ENCODE measurements at regions of chr7 and their contacts with region 1.

Region 1: GRCh38 chr7:117229350-117229749 is 93.5 kb downstream of the WNT2 start:
- DNase-seq: no peak
- ATAC-seq: no peak
- H3K4me3 ChIP-seq: no peak overlapping the region
- H3K27ac ChIP-seq: no peak overlapping the region
- H3K4me1 ChIP-seq: peaks cover 0 to 2% (median 0%) of the 10 kb centered on the region in 12 donors
- H3K27me3 ChIP-seq: no peaks in the 10 kb centered on the region
- CTCF ChIP-seq: no peak
- POLR2A ChIP-seq: no peak

Region 2: GRCh38 chr7:117110480-117111337 is 118.6 kb before region 1 on chr7:
- intact Hi-C with region 1: no loop called
- DNase-seq: no peak
- ATAC-seq: peak in 3 of 4 donors; percentile 32 to 42 (median 39)
- H3K4me3 ChIP-seq: no peak overlapping the region
- H3K27ac ChIP-seq: no peak overlapping the region
- H3K4me1 ChIP-seq: peaks cover 3 to 26% (median 14%) of the 10 kb centered on the region in 12 donors
- H3K27me3 ChIP-seq: no peaks in the 10 kb centered on the region
- CTCF ChIP-seq: no peak
- POLR2A ChIP-seq: no peak

Region 3: GRCh38 chr7:117283371-117283770 is 54.0 kb after region 1 on chr7:
- intact Hi-C with region 1: loop called in 1 of 10 experiments (anchors 10 kb)
- DNase-seq: no peak
- ATAC-seq: no peak
- H3K4me3 ChIP-seq: no peak overlapping the region
- H3K27ac ChIP-seq: no peak overlapping the region
- H3K4me1 ChIP-seq: peaks cover 0 to 3% (median 0%) of the 10 kb centered on the region in 12 donors
- H3K27me3 ChIP-seq: no peaks in the 10 kb centered on the region
- CTCF ChIP-seq: no peak
- POLR2A ChIP-seq: no peak

Region 4: DNA sequence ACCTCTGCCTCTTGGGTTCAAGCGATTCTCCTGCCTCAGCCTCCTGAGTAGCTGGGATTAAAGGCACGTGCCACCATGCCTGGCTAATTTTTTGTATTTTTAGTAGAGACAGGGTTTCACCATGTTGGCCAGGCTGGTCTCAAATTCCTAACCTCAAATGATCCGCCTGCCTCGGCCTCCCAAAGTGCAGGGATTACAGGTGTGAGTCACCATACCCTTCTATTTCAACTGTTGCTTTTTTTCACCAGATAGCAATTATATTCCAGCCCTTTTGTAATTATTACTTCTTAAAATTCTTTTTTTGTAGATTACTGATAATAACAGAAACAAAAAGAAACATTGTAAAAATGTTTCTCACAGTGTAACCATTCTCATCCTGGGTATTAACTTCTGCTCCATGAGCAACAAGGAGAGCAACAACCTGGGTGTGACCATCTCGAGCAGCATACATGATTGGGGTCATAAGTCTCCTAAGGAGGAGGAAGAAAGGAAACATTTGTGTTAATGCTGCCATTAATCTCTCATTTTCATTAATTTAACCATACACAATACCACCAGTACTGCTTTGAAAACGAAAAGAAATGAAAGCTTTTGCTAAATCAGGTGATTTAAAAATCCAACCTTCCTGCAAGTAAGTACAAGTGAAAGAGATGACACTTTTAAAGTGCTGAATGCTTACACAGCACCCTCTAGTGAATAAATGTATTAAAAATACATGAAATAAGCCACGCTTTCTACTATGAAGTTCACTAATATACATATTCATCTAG is 156.2 kb after region 1 on chr7:
- intact Hi-C with region 1: loop called in 1 of 10 experiments (anchors 10 kb)
- DNase-seq: no peak
- ATAC-seq: no peak
- H3K4me3 ChIP-seq: no peak overlapping the region
- H3K27ac ChIP-seq: no peak overlapping the region
- H3K4me1 ChIP-seq: no peaks in the 10 kb centered on the region
- H3K27me3 ChIP-seq: no peaks in the 10 kb centered on the region
- CTCF ChIP-seq: peak in 10 of 12 donors; percentile 14 to 53 (median 38)
- POLR2A ChIP-seq: no peak

Measured in heart left ventricle (tissue), 16 donors.